Body of pancreas (tissue), 4 donors: ENCODE measurements at regions of chr12 and their contacts with region 1.

Region 1: GRCh38 chr12:7113389-7113871 is 4.4 kb upstream of the C1RL start:
- DNase-seq: peak in 2 of 4 donors; percentile 43 to 46
- ATAC-seq: peak; percentile 15
- H3K4me3 ChIP-seq: no peak overlapping the region
- H3K27ac ChIP-seq: no peak overlapping the region
- H3K4me1 ChIP-seq: peaks cover 12% of the 10 kb centered on the region
- H3K27me3 ChIP-seq: no peaks in the 10 kb centered on the region
- CTCF ChIP-seq: peak; percentile 73 to 93 (median 80)
- POLR2A ChIP-seq: no peak

Region 2: DNA sequence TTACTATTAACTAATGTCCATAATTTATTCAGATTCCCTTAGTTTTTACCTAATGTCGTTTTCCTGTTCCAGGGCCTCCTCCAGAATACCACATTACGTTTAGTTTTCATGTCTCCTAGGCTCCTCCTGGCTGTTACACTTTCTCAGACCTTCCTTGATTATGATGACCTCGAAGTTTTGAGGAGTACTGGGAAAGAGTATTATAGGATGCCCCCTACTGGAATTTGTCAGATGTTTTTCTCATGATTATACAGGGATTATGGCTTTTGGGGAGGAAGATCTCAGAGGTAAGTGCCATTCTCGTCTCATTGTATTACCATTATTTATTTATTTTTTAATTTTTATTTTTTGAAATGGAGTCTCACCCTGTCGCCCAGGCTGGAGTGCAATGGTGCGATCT is 70.6 kb before region 1 on chr12:
- intact Hi-C with region 1: loop called (anchors 10 kb)
- DNase-seq: no peak
- ATAC-seq: peak; percentile 97
- H3K4me3 ChIP-seq: no peak overlapping the region
- H3K27ac ChIP-seq: no peak overlapping the region
- H3K4me1 ChIP-seq: no peaks in the 10 kb centered on the region
- H3K27me3 ChIP-seq: no peaks in the 10 kb centered on the region
- CTCF ChIP-seq: peak; percentile 17 to 80 (median 70)
- POLR2A ChIP-seq: no peak